MCF 10A (cell line): ENCODE measurements at regions of chr2 and their contacts with region 1.

Region 1: DNA sequence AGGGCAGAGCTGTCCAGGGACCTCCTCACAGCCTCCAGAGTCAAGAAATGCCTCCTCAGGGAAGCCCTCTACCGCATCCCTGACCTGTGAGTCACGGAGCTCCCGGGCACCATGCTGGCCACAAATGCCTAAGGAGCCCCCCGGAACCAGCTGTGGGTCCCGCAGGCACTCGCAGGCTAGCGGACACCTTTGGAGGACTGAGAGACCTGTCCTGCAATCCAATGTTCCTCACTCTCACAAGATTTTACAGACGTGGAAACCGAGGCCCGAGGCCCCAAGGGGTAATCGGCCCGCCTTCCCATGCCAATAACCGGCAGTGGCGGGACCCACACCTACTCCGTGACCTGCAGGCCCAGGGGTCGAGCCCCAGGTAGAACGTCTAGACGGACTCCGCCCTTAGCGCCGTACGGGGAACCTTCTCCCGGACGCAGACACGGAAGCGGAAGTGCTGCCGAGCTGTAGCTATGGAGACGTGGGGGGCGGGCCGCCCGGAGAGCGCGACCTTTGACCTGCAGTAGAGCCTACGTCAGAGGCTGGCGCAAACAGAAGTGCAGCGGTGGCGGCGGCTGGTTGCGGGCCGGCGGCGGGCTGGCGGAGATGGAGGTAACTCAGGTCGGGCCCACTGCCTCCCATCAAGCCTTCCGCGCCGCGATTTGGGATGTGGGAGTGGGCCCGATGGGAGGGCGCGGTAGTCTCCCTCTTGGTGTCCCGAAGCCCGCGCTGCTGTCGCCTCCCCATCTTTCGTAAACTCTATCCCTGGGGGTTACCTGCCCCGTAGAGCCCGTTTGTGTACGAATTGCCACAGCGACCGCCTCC is at the start of gene GCC2:
- DNase-seq: peak; percentile 91
- H3K4me3 Mint-ChIP-seq: peak within 1 kb of the TSS; percentile 93
- H3K27ac Mint-ChIP-seq: peak within 1 kb of the TSS; percentile 99
- H3K4me1 Mint-ChIP-seq: peaks cover 11% of the 10 kb centered on the region
- H3K27me3 Mint-ChIP-seq: no peaks in the 10 kb centered on the region
- CTCF ChIP-seq: no peak
- total RNA-seq, gene GCC2: 29.8 and 39.7 TPM in 2 replicates

Region 2: DNA sequence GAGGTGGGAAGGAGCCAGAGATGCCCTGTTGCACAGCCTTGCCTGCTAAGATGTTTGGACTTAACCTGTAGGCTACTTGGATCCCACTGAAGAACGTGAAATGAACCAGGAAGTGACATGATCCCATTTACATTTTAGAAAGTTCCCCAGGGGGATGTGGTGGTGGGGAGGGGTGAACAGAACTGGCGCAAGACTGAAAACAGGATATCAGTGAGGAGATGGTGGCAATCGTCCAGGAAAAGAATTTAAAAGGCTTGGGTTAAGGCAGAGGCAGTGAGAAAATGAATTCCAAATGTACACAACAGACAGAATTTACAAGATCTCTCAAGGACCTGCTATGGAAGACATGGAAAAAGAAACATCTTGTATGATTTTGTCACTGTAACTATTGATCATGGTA is 117.9 kb before region 1 on chr2:
- CTCF ChIA-PET with region 1: no interaction called
- POLR2A ChIA-PET with region 1: no interaction called
- intact Hi-C with region 1: no loop called
- DNase-seq: no peak
- H3K4me3 Mint-ChIP-seq: no peak overlapping the region
- H3K27ac Mint-ChIP-seq: no peak overlapping the region
- H3K4me1 Mint-ChIP-seq: peaks cover 9% of the 10 kb centered on the region
- H3K27me3 Mint-ChIP-seq: no peaks in the 10 kb centered on the region
- CTCF ChIP-seq: no peak

Region 3: DNA sequence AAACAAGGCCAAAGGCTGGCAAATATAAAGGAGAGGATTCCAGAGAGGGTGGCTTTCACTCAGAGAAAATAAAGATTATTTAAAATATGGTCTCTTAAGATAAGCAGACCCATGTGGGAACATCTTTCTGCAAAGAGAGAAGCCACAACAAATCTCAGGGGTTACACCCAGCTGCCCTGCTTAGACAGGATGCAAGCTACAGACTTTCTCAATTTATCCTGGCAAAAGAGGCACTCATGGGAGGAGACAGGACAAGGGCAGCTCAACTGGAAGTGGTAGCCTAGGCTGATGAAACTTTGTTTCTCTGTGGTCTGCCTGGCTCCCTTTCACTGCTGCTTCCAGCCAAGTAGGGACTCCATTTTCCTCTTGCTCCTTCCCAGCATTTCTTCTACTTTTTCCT is 97.0 kb before region 1 on chr2:
- CTCF ChIA-PET with region 1: no interaction called
- POLR2A ChIA-PET with region 1: interaction called, 4 read pairs
- intact Hi-C with region 1: loop called (anchors 1 kb)
- DNase-seq: peak; percentile 11
- H3K4me3 Mint-ChIP-seq: no peak overlapping the region
- H3K27ac Mint-ChIP-seq: no peak overlapping the region
- H3K4me1 Mint-ChIP-seq: peaks cover 6% of the 10 kb centered on the region
- H3K27me3 Mint-ChIP-seq: no peaks in the 10 kb centered on the region
- CTCF ChIP-seq: no peak

Region 4: GRCh38 chr2:108377401-108377800 is 71.5 kb before region 1 on chr2:
- CTCF ChIA-PET with region 1: no interaction called
- POLR2A ChIA-PET with region 1: no interaction called
- intact Hi-C with region 1: no loop called
- DNase-seq: no peak
- H3K4me3 Mint-ChIP-seq: no peak overlapping the region
- H3K27ac Mint-ChIP-seq: no peak overlapping the region
- H3K4me1 Mint-ChIP-seq: no peaks in the 10 kb centered on the region
- H3K27me3 Mint-ChIP-seq: no peaks in the 10 kb centered on the region
- CTCF ChIP-seq: no peak

Region 5: GRCh38 chr2:108396845-108397244 is 52.0 kb before region 1 on chr2:
- CTCF ChIA-PET with region 1: interaction called, 13 read pairs
- POLR2A ChIA-PET with region 1: interaction called, 26 read pairs
- intact Hi-C with region 1: loop called (anchors 1 kb)
- DNase-seq: peak; percentile 76
- H3K4me3 Mint-ChIP-seq: no peak overlapping the region
- H3K27ac Mint-ChIP-seq: no peak overlapping the region
- H3K4me1 Mint-ChIP-seq: peaks cover 7% of the 10 kb centered on the region
- H3K27me3 Mint-ChIP-seq: no peaks in the 10 kb centered on the region
- CTCF ChIP-seq: peak; percentile 32

Region 6: GRCh38 chr2:108417255-108417654 is 31.6 kb before region 1 on chr2:
- CTCF ChIA-PET with region 1: interaction called, 12 read pairs
- POLR2A ChIA-PET with region 1: interaction called, 59 read pairs
- intact Hi-C with region 1: loop called (anchors 1 kb)
- DNase-seq: peak; percentile 42
- H3K4me3 Mint-ChIP-seq: no peak overlapping the region
- H3K27ac Mint-ChIP-seq: no peak overlapping the region
- H3K4me1 Mint-ChIP-seq: peaks cover 22% of the 10 kb centered on the region
- H3K27me3 Mint-ChIP-seq: no peaks in the 10 kb centered on the region
- CTCF ChIP-seq: no peak

Region 7: DNA sequence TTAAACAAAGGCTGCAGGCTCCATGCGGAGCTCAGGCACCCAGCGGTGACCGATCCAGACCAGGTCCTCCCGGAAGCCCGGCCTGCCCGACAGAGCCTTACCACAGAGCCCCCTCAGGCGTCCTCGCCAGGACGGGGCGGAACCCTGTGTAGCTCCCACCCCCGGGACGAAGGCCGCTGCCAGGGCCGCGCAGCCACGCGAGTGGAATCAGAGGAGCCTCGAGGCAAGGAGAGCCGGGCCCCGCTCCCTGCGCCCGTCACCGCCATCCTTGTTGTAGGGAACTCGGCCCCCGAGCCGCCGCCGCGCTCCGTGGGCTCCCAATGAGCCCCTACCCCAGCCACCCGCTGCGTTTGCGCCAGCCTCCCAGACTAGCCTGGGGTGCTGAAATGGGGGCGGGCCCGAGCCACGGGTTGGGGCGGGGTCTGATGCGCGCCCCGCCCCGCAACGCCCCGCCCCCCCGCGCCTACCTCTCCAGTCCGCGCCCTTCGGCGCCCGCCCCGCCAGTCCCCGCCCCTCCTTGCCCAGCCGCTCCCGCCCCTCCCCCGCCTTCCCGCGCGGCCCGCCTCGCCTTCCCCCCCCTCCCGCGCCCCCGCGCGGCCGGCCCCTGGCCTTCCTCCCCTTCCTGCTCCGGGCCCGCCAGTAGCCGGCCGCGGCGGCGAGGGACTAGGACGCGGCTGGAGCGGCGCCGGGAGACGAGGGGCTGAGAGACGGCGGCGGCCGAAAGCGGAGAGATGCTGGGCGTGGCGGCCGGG is 85.1 kb after region 1 on chr2 and contains the start of gene LIMS1:
- CTCF ChIA-PET with region 1: interaction called, 4 read pairs
- POLR2A ChIA-PET with region 1: interaction called, 33 read pairs
- intact Hi-C with region 1: no loop called
- DNase-seq: peak; percentile 90
- H3K4me3 Mint-ChIP-seq: peak within 1 kb of the TSS; percentile 90
- H3K27ac Mint-ChIP-seq: peak within 1 kb of the TSS; percentile 83
- H3K4me1 Mint-ChIP-seq: peaks cover 34% of the 10 kb centered on the region
- H3K27me3 Mint-ChIP-seq: no peaks in the 10 kb centered on the region
- CTCF ChIP-seq: no peak
- total RNA-seq, gene LIMS1: 70.9 and 74.9 TPM in 2 replicates

Region 8: DNA sequence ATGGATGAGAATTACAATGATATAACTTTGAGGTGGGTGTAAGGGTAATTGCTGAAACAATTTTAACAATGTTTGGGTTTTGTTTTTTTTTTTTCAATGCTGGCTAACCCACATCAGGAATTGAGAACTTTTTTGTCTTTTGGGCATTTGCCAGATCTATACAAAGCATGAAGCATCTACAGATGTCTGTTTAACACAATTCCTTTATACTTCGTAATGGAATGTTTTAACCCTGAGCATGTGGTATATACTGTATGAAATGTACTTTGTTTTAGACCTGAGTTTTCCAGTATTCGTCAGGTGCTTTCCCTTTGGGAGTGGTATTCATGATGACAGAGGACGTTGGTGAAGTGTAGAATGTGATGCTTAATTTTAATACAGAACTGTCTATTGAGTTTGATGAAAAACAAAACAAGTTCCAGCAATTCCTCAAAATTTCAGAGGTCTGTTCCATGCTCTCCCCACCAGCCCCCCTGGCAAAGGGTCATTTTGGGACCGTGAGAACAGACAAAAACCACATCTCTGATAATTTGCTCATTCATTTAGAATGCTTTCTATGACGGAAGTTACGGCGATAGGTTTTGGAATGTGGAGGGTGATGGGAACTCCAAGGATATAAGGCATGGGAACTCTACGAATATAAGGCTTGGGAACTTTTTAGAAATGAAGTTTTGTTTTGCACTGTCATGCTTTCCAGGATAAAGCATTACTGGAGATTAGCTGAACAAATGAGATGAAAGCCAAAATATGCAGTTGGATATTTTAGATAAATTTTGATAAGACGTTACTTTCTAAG is 99.5 kb after region 1 on chr2:
- CTCF ChIA-PET with region 1: no interaction called
- POLR2A ChIA-PET with region 1: no interaction called
- intact Hi-C with region 1: no loop called
- DNase-seq: no peak
- H3K4me3 Mint-ChIP-seq: no peak overlapping the region
- H3K27ac Mint-ChIP-seq: no peak overlapping the region
- H3K4me1 Mint-ChIP-seq: peaks cover 20% of the 10 kb centered on the region
- H3K27me3 Mint-ChIP-seq: no peaks in the 10 kb centered on the region
- CTCF ChIP-seq: no peak